ENCODE measurements at regions of chr16 and their contacts with region 1.

Region 1: DNA sequence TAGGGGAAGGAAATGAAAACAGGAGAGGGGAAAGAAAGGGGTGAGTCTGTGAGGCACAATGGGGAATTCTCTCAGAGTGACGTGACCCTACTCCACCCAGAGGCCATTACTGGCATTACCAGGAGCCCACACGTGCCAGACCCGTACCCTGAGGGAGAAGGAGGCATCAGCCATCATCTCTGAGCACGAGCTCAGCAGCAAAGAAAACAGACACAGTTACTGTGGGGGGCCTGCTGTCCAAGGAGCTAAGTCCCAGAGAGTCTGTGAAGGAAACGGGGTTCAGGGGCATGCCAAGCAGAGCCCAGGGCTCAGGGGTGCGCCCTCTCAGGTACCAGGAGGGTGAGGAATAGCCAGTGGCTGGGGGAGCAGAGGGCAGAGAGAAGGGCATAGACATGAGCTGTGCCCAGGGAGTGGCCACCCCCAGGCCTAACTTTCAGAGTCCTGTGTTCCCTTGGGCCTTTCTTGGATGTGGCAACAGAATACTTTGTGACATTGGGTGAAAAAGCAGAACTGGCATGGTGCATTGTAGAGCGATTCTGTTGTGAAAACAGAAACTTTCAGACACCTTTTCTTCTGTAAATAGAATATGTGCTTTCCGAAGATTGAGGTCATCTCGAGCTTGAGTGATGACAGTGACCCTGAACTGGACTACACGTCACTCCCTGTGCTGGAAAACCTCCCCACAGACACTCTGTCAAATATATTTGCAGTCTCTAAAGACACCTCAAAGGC is 11.3 kb downstream of the TAF1C start:
- DNase-seq: peak; percentile 83
- H3K4me3 Mint-ChIP-seq: no peak overlapping the region
- H3K27ac Mint-ChIP-seq: no peak overlapping the region
- H3K4me1 Mint-ChIP-seq: peaks cover 17% of the 10 kb centered on the region
- H3K27me3 Mint-ChIP-seq: no peaks in the 10 kb centered on the region

Region 2: DNA sequence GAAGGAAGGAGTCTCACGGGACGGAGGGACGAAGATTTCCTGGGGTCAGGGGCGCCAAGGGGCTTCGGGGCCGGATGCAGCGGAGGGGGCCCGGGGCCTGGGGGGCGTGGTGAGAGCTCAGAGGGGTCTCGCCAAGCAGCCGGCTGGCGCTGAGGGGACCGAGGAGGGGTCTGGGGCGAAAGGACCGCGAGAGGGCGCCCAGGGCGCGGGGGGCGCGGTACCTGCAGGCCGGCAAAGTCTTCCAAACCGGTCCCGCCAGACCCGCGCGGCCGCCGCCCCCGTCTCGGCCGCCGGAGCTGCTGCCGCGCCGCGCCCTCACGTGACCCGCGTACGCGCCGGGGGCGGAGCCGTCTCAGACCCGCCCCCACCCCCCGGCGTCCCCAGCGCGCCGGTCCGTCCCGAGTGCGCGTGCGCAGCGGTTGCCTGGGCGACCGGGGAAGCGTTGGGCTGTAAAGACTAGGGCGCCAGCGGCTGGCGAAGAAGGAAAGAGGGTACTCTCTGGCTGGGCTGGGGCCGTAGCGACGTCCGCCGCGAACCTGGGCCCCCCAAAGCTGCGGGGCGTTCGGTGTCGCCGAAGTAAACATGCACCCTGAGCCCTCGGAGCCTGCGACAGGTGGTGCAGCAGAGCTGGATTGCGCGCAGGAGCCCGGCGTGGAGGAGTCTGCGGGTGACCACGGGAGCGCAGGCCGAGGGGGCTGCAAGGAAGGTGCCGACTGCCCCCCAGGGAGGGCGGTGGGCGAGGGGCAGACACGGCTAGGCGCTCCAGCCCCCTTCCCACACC is 30.5 kb before region 1 on chr16 and contains the starts of genes DNAAF1 and HSDL1:
- CTCF ChIA-PET with region 1: interaction called, 3 read pairs
- intact Hi-C with region 1: loop called (anchors 2 kb)
- DNase-seq: peak; percentile 93
- H3K4me3 Mint-ChIP-seq: peak within 1 kb of the TSS; percentile 90
- H3K27ac Mint-ChIP-seq: no peak within 1 kb of the TSS
- H3K4me1 Mint-ChIP-seq: peaks cover 13% of the 10 kb centered on the region
- H3K27me3 Mint-ChIP-seq: no peaks in the 10 kb centered on the region
- total RNA-seq, gene DNAAF1: not detected
- total RNA-seq, gene HSDL1: 5.8 to 7.5 TPM

Region 3: GRCh38 chr16:84186685-84187437 is 11.3 kb after region 1 on chr16 and contains the start of gene TAF1C:
- CTCF ChIA-PET with region 1: interaction called, 43 read pairs
- intact Hi-C with region 1: no loop called
- DNase-seq: peak; percentile 94
- H3K4me3 Mint-ChIP-seq: peak within 1 kb of the TSS; percentile 93
- H3K27ac Mint-ChIP-seq: peak within 1 kb of the TSS; percentile 89
- H3K4me1 Mint-ChIP-seq: peaks cover 21% of the 10 kb centered on the region
- H3K27me3 Mint-ChIP-seq: no peaks in the 10 kb centered on the region
- total RNA-seq, gene TAF1C: 59.3 to 66.2 TPM

Region 4: DNA sequence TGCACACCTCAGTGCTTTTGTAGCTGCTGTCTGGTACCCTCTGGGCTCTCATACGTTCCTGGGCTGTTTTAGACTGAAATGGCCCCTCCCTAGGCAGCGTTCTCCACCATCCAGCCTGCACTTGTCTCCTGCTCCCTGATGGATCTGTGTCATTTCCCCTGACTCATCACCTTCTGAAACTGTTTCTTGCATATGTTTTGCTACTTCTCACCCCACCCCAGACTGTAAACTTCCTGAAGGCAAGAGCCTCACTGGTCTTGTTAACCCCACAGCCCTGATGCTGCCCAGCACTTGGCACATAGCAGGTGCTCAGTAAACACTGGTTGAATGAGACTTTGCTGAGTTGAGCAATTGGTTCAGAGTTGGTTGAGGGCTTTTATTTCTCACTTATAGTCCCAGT is 722.9 kb after region 1 on chr16:
- CTCF ChIA-PET with region 1: no interaction called
- intact Hi-C with region 1: no loop called
- DNase-seq: peak; percentile 19
- H3K4me3 Mint-ChIP-seq: no peak overlapping the region
- H3K27ac Mint-ChIP-seq: no peak overlapping the region
- H3K4me1 Mint-ChIP-seq: peaks cover 6% of the 10 kb centered on the region
- H3K27me3 Mint-ChIP-seq: no peaks in the 10 kb centered on the region